ENCODE measurements at regions of chr19 and their contacts with region 1.

Region 1: DNA sequence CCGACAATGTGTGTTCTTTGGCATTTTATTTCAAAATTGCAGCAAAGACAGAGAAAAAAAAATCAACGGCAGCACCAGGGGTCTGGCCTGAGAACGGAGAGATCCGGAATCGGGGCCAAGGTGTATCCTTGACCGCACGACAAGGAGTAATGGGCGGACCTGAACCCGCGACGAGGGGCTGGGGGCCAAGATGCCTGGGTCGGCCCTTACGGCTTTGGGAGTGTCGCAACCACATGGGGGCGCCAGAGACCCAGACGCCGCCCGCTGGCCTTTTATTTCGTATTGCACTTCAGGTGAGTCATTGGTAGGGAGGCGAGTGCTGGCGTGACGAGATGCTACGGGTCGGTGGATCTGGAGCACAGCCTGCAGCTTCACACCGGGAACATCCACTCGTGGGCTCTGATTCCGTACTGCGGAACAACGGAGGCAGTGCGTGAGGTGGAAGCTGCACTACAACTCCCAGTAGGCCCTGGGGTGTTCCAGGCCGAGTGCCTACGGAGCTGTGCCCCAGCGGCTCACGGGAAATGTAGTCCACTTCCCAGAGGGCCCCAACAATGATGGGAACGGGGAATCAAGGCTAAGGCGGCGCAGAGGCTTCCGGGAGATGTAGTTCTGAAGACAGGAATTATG is 15.7 kb downstream of the BCAT2 start:
- DNase-seq: peak; percentile 92 to 95 (median 94)
- ATAC-seq: peak; percentile 98 to 99 (median 99)
- H3K4me3 ChIP-seq: peak overlapping the region in 11 of 12 donors; percentile 24 to 74 (median 57)
- H3K27ac ChIP-seq: peak overlapping the region; percentile 7 to 91 (median 74)
- H3K4me1 ChIP-seq: peaks cover 0 to 13% (median 7%) of the 10 kb centered on the region in 12 donors
- H3K27me3 ChIP-seq: no peaks in the 10 kb centered on the region
- CTCF ChIP-seq: peak; percentile 88 to 100 (median 98)
- POLR2A ChIP-seq: peak in 1 of 2 donors; percentile 31

Region 2: GRCh38 chr19:48746738-48747575 is 48.2 kb before region 1 on chr19 and contains the start of gene IZUMO1:
- intact Hi-C with region 1: no loop called
- DNase-seq: peak; percentile 85 to 91 (median 88)
- ATAC-seq: peak; percentile 73 to 89 (median 84)
- H3K4me3 ChIP-seq: peak within 1 kb of the TSS in 11 of 12 donors; percentile 20 to 60 (median 49)
- H3K27ac ChIP-seq: peak within 1 kb of the TSS; percentile 61 to 93 (median 88)
- H3K4me1 ChIP-seq: peaks cover 0 to 23% (median 10%) of the 10 kb centered on the region in 12 donors
- H3K27me3 ChIP-seq: peaks cover 0 to 14% (median 0%) of the 10 kb centered on the region in 9 donors
- CTCF ChIP-seq: no peak
- POLR2A ChIP-seq: peak in 1 of 2 donors; percentile 21
- total RNA-seq, gene IZUMO1: 0.13 to 0.56 (median 0.42) TPM

Region 3: DNA sequence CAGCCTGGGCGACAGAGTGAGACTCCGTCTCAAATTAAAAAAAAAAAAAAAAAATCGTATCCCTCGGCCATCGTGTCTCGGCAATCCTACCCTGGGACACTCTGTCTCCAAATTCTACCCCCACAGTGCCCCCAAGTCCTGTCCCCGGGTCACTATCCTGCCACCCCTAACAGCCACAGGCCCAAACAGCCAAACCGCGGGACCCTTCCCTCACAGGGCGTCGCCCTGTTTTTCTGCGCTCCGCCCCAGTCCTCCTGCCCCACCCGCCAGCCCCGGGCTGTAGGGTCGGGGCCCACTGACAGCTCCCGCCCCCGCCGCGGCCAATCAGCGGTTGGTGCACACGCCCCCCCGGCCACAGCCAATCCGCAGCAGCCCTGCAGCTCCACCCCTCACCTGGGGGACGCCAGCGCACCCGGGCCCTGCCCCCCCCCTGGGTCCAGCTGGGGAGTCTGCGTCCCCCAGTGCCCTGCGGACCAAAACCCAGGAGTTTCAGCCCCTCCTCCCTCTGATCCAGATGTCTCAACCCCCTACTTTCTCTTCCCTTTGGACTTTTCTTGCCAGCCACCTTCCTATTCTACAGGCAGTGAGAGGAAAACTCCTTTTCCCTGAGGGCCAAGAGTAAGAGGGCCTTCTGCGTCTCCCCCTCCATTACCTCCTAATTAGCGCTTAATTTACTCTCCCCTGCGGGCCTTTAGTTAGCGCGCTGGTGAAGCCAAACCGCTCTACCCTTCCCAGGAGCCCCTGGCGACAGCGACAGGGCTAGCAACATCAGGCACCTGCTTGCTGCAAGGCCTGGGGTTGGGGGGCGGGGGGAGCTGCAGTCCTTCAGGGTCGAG is 17.1 kb after region 1 on chr19:
- intact Hi-C with region 1: loop called in 2 of 10 experiments (anchors 2 kb)
- DNase-seq: peak; percentile 91 to 96 (median 93)
- ATAC-seq: peak; percentile 89 to 94 (median 92)
- H3K4me3 ChIP-seq: peak overlapping the region; percentile 45 to 76 (median 66)
- H3K27ac ChIP-seq: peak overlapping the region; percentile 60 to 96 (median 90)
- H3K4me1 ChIP-seq: peaks cover 0 to 42% (median 18%) of the 10 kb centered on the region in 12 donors
- H3K27me3 ChIP-seq: no peaks in the 10 kb centered on the region
- CTCF ChIP-seq: no peak
- POLR2A ChIP-seq: peak; percentile 30 to 80

Region 4: GRCh38 chr19:48835734-48836088 is 40.5 kb after region 1 on chr19:
- intact Hi-C with region 1: loop called (anchors 1 to 5 kb)
- DNase-seq: peak; percentile 88 to 95 (median 91)
- ATAC-seq: peak; percentile 84 to 95 (median 94)
- H3K4me3 ChIP-seq: peak overlapping the region in 11 of 12 donors; percentile 2 to 57 (median 47)
- H3K27ac ChIP-seq: peak overlapping the region in 7 of 12 donors; percentile 52 to 86 (median 69)
- H3K4me1 ChIP-seq: peaks cover 0 to 19% (median 10%) of the 10 kb centered on the region in 12 donors
- H3K27me3 ChIP-seq: peaks cover 0 to 4% (median 0%) of the 10 kb centered on the region in 9 donors
- CTCF ChIP-seq: peak; percentile 76 to 94 (median 88)
- POLR2A ChIP-seq: no peak

Region 5: DNA sequence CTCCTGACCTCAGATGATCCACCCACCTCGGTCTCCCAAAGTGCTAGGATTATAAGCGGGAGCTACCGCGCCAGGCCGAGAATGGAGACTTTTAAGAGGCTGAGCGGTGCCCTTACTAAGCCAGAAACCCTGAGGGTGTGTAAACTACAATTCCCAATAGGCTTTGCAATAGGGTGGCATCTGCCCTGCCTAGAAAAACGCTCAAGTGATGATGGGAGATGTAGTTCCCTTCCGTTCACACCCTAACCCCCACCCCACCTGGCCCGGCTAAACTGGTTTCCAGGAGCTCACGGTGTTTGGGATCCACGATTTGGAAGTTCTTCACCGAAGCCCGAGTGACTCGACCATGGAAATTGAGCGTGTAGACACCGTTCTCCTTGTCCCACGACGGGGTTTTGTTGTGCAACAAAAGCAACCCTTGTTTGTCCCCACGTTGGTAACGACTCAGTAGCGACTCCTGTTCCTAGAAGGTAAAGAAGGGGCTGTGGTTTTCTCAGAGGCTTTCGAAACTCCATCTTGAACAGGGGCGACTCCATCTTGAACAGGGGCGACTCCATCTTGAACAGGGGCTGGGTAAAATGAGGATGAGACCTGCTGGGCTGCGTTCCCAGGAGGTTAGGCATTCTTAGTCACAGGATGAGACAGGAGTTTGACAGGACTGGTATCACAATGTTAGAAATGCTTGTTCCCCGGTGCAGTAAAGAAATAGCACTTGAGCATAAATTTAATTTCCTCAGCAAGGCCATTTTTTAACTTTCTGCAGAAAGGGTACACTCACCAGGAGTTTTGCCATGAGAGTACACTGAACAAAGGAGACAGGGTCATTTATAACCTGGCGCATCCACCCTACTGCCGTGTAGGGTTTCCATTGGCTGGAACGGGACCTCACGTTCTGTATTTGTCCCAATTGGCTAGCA is 86.8 kb after region 1 on chr19:
- intact Hi-C with region 1: no loop called
- DNase-seq: no peak
- ATAC-seq: peak in 3 of 4 donors; percentile 30 to 62 (median 46)
- H3K4me3 ChIP-seq: no peak overlapping the region
- H3K27ac ChIP-seq: peak overlapping the region in 1 of 12 donors; percentile 62
- H3K4me1 ChIP-seq: peaks cover 0 to 34% (median 23%) of the 10 kb centered on the region in 12 donors
- H3K27me3 ChIP-seq: no peaks in the 10 kb centered on the region
- CTCF ChIP-seq: no peak
- POLR2A ChIP-seq: no peak

Region 6: DNA sequence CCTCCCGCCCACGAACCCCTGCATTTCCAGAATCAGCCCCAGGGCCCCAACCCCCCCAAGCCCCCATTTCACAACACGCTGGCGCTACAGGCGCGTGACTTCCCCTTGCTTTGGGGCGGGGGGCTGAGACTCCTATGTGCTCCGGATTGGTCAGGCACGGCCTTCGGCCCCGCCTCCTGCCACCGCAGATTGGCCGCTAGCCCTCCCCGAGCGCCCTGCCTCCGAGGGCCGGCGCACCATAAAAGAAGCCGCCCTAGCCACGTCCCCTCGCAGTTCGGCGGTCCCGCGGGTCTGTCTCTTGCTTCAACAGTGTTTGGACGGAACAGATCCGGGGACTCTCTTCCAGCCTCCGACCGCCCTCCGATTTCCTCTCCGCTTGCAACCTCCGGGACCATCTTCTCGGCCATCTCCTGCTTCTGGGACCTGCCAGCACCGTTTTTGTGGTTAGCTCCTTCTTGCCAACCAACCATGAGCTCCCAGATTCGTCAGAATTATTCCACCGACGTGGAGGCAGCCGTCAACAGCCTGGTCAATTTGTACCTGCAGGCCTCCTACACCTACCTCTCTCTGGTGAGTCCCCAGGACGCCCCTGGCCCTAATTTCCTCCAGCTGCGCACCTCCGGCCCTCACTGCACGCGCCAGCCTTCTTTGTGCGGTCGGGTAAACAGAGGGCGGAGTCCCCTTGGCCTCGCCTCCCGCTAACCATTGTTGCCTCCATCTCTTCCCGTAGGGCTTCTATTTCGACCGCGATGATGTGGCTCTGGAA is 170.1 kb after region 1 on chr19 and contains the start of gene FTL:
- intact Hi-C with region 1: loop called in 5 of 10 experiments (anchors 5 to 10 kb)
- DNase-seq: peak; percentile 98 to 99 (median 98)
- ATAC-seq: peak; percentile 85 to 92 (median 88)
- H3K4me3 ChIP-seq: peak within 1 kb of the TSS; percentile 61 to 99 (median 88)
- H3K27ac ChIP-seq: peak within 1 kb of the TSS; percentile 73 to 97 (median 93)
- H3K4me1 ChIP-seq: peaks cover 10 to 65% (median 47%) of the 10 kb centered on the region in 12 donors
- H3K27me3 ChIP-seq: no peaks in the 10 kb centered on the region
- CTCF ChIP-seq: no peak
- POLR2A ChIP-seq: peak; percentile 98 to 100
- total RNA-seq, gene FTL: 484 to 6,770 (median 857) TPM

Region 7: GRCh38 chr19:48970923-48971395 is 175.8 kb after region 1 on chr19:
- intact Hi-C with region 1: loop called in 5 of 10 experiments (anchors 5 to 10 kb)
- DNase-seq: peak; percentile 77 to 91 (median 82)
- ATAC-seq: peak; percentile 48 to 67 (median 54)
- H3K4me3 ChIP-seq: no peak overlapping the region
- H3K27ac ChIP-seq: peak overlapping the region in 5 of 12 donors; percentile 2 to 23 (median 16)
- H3K4me1 ChIP-seq: peaks cover 5 to 48% (median 31%) of the 10 kb centered on the region in 12 donors
- H3K27me3 ChIP-seq: no peaks in the 10 kb centered on the region
- CTCF ChIP-seq: peak; percentile 83 to 97 (median 92)
- POLR2A ChIP-seq: no peak

Region 8: GRCh38 chr19:48993175-48994034 is 198.2 kb after region 1 on chr19 and contains the starts of genes GYS1 and RUVBL2:
- intact Hi-C with region 1: no loop called
- DNase-seq: peak; percentile 99 to 100 (median 100)
- ATAC-seq: peak; percentile 91 to 94 (median 94)
- H3K4me3 ChIP-seq: peak within 1 kb of the TSS; percentile 56 to 99 (median 82)
- H3K27ac ChIP-seq: peak within 1 kb of the TSS; percentile 86 to 99 (median 96)
- H3K4me1 ChIP-seq: peaks cover 6 to 51% (median 35%) of the 10 kb centered on the region in 12 donors
- H3K27me3 ChIP-seq: no peaks in the 10 kb centered on the region
- CTCF ChIP-seq: peak; percentile 92 to 100 (median 98)
- POLR2A ChIP-seq: peak; percentile 77 to 98
- total RNA-seq, gene GYS1: 125 to 264 (median 173) TPM
- total RNA-seq, gene RUVBL2: 41.4 to 93.9 (median 50.9) TPM

Region 9: DNA sequence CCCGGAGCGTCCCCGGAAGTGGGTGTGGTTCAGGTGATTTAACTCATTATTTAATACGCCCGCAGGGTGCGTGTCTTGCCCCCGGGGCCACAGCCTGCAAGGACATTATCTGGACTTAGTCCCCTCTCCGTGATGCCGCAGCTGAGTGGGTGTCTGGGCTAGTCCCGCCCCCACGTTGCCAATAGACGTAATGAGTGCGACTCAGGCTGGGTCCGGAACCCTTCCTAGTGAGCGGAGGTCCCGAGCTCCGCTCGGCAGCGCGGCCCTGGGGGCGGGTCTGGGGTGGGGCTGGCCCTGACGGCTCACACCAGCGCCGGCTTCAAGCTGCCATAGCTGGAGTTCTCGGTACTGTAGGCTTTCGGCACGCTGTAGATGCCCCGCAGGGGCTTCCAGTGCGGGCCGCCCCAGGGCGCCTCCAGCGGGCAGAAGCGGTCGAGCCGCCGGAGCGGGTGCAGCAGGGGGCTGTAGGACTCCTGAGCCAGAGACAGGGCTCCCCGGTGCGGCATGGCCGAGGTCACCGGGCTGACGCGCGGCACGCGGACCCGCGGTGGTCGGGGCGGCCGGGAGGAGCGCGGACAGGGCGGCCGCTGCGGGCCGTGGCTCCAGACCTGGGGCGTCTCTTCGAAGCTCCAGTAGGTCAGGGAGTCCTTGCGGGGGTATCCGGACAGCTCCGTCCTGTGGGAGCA is 222.6 kb after region 1 on chr19:
- intact Hi-C with region 1: no loop called
- DNase-seq: peak; percentile 31 to 77 (median 53)
- ATAC-seq: peak in 3 of 4 donors; percentile 51 to 71 (median 69)
- H3K4me3 ChIP-seq: peak overlapping the region; percentile 15 to 63 (median 52)
- H3K27ac ChIP-seq: peak overlapping the region in 1 of 12 donors; percentile 42
- H3K4me1 ChIP-seq: peaks cover 0 to 29% (median 16%) of the 10 kb centered on the region in 12 donors
- H3K27me3 ChIP-seq: peaks cover 0 to 25% (median 0%) of the 10 kb centered on the region in 9 donors
- CTCF ChIP-seq: peak in 9 of 12 donors; percentile 32 to 68 (median 50)
- POLR2A ChIP-seq: no peak

Measured in heart left ventricle (tissue), 16 donors.